Dendritic cell treated with granulocyte-macrophage colony-stimulating factor and Interleukin-4, amounts not matched to agents 40 ng/mL and 50 ng/mL, for 4 days (primary cell): ENCODE measurements at regions of chr1 and their contacts with region 1.

Region 1: DNA sequence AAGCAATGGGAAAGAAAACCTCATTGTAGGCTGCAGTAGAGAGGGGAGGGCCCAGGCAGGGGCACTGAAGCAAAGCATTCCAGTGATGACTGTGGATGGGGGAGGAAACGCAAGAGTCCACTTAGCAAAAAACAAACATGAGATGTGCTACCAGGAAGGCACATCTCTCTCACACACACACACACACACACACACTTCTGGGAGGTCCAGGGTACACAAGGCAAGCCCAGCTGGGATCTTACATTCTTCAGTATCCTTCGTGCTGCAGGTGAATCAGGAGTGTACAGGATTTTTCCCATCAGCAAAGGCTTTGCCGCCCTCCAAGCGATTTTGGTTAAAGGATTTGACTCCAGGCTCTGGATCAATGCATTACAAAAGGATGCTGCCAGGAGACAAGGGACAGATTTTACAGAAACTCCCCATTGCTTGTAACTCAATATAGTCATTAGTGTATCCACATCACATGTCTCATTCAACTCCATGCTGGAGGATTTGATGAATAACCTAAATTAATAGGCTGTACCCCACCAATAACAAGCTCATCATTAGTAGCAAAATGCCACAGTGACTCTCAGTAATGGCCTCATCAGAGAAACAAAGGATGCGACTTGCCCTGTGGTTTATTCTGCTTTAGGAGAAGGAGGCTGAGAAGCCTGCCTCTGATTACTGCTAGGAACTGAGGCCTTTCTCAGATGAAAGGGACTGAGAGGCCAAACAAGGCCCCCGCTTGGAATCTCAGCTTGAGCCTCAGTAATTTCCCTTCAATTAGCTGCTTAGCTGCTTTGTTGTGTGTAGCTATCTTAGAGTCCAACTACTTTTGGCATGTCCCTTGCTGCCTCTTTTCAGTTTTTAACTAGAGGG is 41.6 kb downstream of the ABCA4 start:
- H3K4me3 Mint-ChIP-seq: no peak overlapping the region
- H3K27ac Mint-ChIP-seq: no peak overlapping the region
- H3K4me1 Mint-ChIP-seq: no peaks in the 10 kb centered on the region
- H3K27me3 Mint-ChIP-seq: peaks cover 67% of the 10 kb centered on the region

Region 2: GRCh38 chr1:94101541-94102525 is 22.5 kb after region 1 on chr1:
- intact Hi-C with region 1: no loop called
- H3K4me3 Mint-ChIP-seq: no peak overlapping the region
- H3K27ac Mint-ChIP-seq: no peak overlapping the region
- H3K4me1 Mint-ChIP-seq: peaks cover 44% of the 10 kb centered on the region
- H3K27me3 Mint-ChIP-seq: peaks cover 96% of the 10 kb centered on the region

Region 3: DNA sequence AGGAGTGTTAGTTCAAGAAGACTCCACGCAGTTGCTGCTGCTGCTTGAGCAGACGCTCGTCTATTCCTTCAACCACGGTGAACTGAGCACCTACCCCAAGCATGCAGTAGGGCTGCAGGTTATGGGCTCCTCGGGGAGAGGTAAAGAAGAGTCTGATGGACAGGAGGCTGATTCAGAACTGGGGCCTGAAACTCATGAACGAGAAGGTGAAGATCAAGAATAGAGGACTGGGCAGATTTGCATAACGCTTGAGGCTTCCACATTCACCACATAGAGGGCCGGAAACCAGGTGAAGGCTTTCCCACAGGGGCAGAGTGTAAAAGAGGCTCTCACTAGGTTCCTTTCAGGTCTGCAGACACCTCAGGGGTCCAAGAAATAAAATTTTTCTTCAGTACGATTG is 32.6 kb after region 1 on chr1:
- intact Hi-C with region 1: loop called (anchors 5 kb)
- H3K4me3 Mint-ChIP-seq: no peak overlapping the region
- H3K27ac Mint-ChIP-seq: no peak overlapping the region
- H3K4me1 Mint-ChIP-seq: peaks cover 4% of the 10 kb centered on the region
- H3K27me3 Mint-ChIP-seq: peaks cover 98% of the 10 kb centered on the region